GM23248 (cell line): ENCODE measurements at regions of chr5 and their contacts with region 1.

Region 1: GRCh38 chr5:44332285-44332971 is 56.8 kb downstream of the FGF10 start:
- DNase-seq: peak; percentile 69
- H3K4me3 ChIP-seq: no peak overlapping the region
- H3K27ac ChIP-seq: no peak overlapping the region
- H3K4me1 ChIP-seq: no peaks in the 10 kb centered on the region
- H3K27me3 ChIP-seq: no peaks in the 10 kb centered on the region; the same call in 1 of the 2 replicates

Region 2: DNA sequence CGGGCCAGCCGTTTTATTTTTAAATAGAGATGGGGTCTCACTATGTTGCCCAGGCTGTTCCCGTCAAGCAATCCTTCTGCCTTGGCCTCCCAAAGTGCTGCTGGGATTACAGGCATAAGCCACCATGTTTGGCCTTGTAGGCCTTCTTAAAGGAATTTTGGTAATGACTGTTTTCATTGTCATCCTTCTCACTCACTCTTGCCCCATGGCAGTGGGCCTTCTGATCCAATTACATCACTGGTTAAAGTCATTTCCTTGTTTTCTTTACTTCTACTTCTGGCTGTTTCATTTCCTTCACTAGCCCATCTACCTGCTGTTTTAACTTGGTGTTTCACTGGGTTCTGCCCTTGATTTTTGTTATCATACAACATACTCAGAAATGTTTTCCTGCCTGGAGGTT is 1160.5 kb before region 1 on chr5:
- in situ Hi-C with region 1: no loop called
- DNase-seq: peak; percentile 35
- H3K4me3 ChIP-seq: no peak overlapping the region
- H3K27ac ChIP-seq: no peak overlapping the region
- H3K4me1 ChIP-seq: no peaks in the 10 kb centered on the region
- H3K27me3 ChIP-seq: no peaks in the 10 kb centered on the region

Region 3: GRCh38 chr5:43729846-43730478 is 602.5 kb before region 1 on chr5:
- in situ Hi-C with region 1: loop called (anchors 10 kb)
- DNase-seq: peak; percentile 48
- H3K4me3 ChIP-seq: no peak overlapping the region
- H3K27ac ChIP-seq: no peak overlapping the region
- H3K4me1 ChIP-seq: peaks cover 3% of the 10 kb centered on the region
- H3K27me3 ChIP-seq: no peaks in the 10 kb centered on the region

Region 4: GRCh38 chr5:44714871-44715561 is 382.6 kb after region 1 on chr5:
- in situ Hi-C with region 1: no loop called
- DNase-seq: no peak
- H3K4me3 ChIP-seq: no peak overlapping the region
- H3K27ac ChIP-seq: no peak overlapping the region
- H3K4me1 ChIP-seq: no peaks in the 10 kb centered on the region
- H3K27me3 ChIP-seq: no peaks in the 10 kb centered on the region